ENCODE measurements at regions of chr10 and their contacts with region 1.

Region 1: DNA sequence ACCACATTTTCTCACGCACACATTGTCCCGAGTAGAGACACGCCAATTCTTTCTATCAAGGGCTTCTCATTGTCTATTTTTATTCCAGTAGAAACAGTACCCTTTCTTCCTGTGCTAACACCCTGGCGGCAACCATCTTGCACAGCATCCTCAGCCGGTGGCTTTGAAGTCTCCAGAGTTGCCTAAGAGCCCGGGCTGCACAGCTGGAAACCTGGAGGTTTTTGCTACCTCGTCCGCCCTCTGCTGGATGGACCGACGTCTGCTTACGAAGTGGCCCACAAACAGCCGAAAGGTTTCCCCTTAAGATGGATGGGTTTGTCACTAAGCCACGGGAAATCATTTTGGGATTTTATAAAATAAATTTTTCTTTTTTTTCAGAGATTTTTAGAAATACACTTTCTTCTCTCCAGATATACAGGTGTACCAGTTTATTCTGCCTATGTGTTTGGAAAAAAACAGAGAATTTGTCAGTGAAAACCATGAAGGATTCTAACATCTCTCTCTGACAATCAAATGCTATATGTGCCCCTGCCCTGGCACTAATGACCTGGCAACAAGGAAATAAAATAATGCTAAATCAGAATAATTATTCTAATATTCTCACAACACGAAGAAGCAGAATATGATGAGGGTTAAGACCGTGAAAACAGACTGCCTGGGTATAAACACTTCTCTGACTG is 81.8 kb upstream of the FAM204A start:
- DNase-seq: peak; percentile 75
- H3K4me3 ChIP-seq: no peak overlapping the region
- H3K27ac ChIP-seq: no peak overlapping the region
- H3K4me1 ChIP-seq: no peaks in the 10 kb centered on the region
- H3K27me3 ChIP-seq: no peaks in the 10 kb centered on the region
- CTCF ChIP-seq: peak; percentile 62 to 78
- POLR2A ChIP-seq: no peak

Region 2: DNA sequence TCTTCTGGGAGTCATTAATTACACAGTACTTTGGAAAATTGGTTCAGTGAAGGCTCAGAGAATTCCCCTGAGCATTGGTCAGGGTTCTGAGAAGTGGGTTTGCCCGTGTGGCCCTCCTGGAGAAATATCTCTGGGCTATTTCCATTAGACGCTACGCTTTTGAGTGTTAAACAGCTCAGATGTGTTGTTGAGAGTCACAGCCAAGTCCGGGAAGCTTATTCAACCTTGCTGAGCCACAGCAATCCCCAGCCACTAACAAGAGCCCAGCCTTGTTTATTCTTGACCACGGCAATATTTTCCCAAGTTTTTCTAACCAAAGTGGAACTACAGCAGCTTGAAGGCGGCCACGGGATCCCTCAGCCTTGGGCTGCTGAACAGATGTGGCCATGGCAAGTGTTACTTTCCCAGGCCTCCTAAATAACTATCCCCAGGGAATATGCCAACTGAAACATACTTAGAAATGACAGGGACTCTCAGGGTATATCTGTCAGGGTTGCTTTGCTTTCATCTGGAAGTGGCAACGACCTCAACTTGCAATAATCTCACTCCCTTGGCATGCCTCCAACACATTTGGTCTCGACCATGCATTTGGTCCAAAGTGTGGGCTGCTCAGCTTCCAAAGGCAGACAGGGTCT is 666.7 kb before region 1 on chr10:
- CTCF ChIA-PET with region 1: no interaction called
- POLR2A ChIA-PET with region 1: no interaction called
- dilution Hi-C with region 1: no loop called
- intact Hi-C with region 1: no loop called
- DNase-seq: no peak
- H3K4me3 ChIP-seq: no peak overlapping the region
- H3K27ac ChIP-seq: no peak overlapping the region
- H3K4me1 ChIP-seq: no peaks in the 10 kb centered on the region
- H3K27me3 ChIP-seq: no peaks in the 10 kb centered on the region
- CTCF ChIP-seq: no peak
- POLR2A ChIP-seq: no peak

Region 3: GRCh38 chr10:118241229-118242137 is 182.5 kb before region 1 on chr10:
- CTCF ChIA-PET with region 1: no interaction called
- POLR2A ChIA-PET with region 1: no interaction called
- dilution Hi-C with region 1: no loop called
- intact Hi-C with region 1: loop called (anchors 1 kb)
- DNase-seq: peak; percentile 74
- H3K4me3 ChIP-seq: no peak overlapping the region
- H3K27ac ChIP-seq: no peak overlapping the region
- H3K4me1 ChIP-seq: no peaks in the 10 kb centered on the region
- H3K27me3 ChIP-seq: peaks cover 7 to 12% of the 10 kb centered on the region in 2 experiments
- CTCF ChIP-seq: peak; percentile 81 to 88
- POLR2A ChIP-seq: no peak

Region 4: GRCh38 chr10:118341791-118342637 is 81.9 kb before region 1 on chr10 and contains the start of gene FAM204A:
- CTCF ChIA-PET with region 1: no interaction called
- POLR2A ChIA-PET with region 1: no interaction called
- dilution Hi-C with region 1: no loop called
- intact Hi-C with region 1: loop called (anchors 5 kb)
- DNase-seq: peak; percentile 96
- H3K4me3 ChIP-seq: peak within 1 kb of the TSS; percentile 72 to 95 (median 91)
- H3K27ac ChIP-seq: peak within 1 kb of the TSS; percentile 11
- H3K4me1 ChIP-seq: peaks cover 13% of the 10 kb centered on the region
- H3K27me3 ChIP-seq: peaks cover 0 to 2% of the 10 kb centered on the region in 2 experiments
- CTCF ChIP-seq: no peak
- POLR2A ChIP-seq: peak; percentile 84
- total RNA-seq, gene FAM204A: 68.7 and 73.7 TPM in 2 replicates

Region 5: GRCh38 chr10:118459726-118460193 is 35.8 kb after region 1 on chr10:
- CTCF ChIA-PET with region 1: interaction called, 11 read pairs
- POLR2A ChIA-PET with region 1: no interaction called
- dilution Hi-C with region 1: no loop called
- intact Hi-C with region 1: no loop called
- DNase-seq: peak; percentile 68
- H3K4me3 ChIP-seq: no peak overlapping the region
- H3K27ac ChIP-seq: no peak overlapping the region
- H3K4me1 ChIP-seq: no peaks in the 10 kb centered on the region
- H3K27me3 ChIP-seq: no peaks in the 10 kb centered on the region
- CTCF ChIP-seq: peak; percentile 67 to 80
- POLR2A ChIP-seq: no peak

Measured in endothelial cell of umbilical vein (primary cell).